Posterior vena cava (tissue), 2 donors: ENCODE measurements at regions of chr7 and their contacts with region 1.

Region 1: GRCh38 chr7:152093717-152094116 is 68.2 kb downstream of the GALNT11 start:
- DNase-seq: no peak

Region 2: GRCh38 chr7:151754142-151754590 is 339.6 kb before region 1 on chr7:
- intact Hi-C with region 1: no loop called
- DNase-seq: peak; percentile 95

Region 3: GRCh38 chr7:152130658-152131590 is 37.2 kb after region 1 on chr7:
- intact Hi-C with region 1: loop called in 1 of 2 experiments (anchors 2 kb)
- DNase-seq: no peak